ENCODE measurements at regions of chr10 and their contacts with region 1.

Region 1: DNA sequence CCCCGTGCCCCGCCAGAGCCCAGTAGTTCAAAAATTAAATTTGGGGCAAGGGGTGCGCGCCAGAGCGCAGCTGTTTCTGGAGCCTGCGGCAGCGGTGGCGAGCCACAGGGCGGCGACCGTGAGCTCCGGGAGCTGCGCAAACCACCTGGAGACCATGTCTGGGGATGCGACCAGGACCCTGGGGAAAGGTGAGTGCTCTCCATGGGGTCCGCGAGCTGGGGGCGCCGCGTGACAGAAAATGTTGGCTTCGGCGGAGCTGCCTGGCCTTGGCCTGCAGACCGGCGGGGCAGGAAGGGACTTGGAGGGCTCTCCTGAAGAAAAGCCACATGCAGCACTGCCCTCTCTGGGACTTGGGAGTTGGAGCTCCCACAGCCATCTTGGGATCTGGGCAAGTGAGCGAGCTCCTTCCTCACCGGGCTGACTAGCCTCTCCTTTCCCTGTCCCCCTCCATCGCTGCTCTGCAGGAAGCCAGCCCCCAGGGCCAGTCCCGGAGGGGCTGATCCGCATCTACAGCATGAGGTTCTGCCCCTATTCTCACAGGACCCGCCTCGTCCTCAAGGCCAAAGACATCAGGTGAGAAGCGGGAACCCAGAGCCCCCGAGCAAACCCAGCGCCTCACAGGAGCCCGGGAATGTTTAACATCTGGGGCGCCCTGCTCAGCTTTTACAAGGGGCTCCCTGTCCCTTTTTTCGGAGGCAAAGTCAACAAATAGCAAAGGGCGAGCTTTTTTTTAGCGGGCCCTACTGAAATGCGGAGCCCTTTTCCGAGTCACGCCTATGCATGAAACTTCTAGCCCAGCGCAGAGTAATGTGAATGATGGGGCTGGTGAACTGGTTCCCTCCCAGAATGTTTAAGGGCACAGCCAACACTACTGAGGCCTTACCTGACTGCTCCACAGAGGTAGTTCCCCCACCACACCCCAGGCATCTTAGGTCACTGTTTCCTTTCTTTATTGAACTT is 6.1 kb downstream of the GSTO2 start:
- DNase-seq: peak; percentile 79
- H3K4me3 ChIP-seq: peak overlapping the region in 1 of 2 experiments; percentile 41; a peak in 1 of 4 replicates
- H3K27ac ChIP-seq: peak overlapping the region in 1 of 2 experiments; percentile 76; a peak in 1 of 4 replicates
- H3K4me1 ChIP-seq: peaks cover 2 to 11% of the 10 kb centered on the region in 2 experiments; a peak in 2 of 4 replicates
- H3K27me3 ChIP-seq: no peaks in the 10 kb centered on the region
- CTCF ChIP-seq: peak; percentile 53
- EP300 ChIP-seq: no peak
- RAD21 ChIP-seq: peak; percentile 39

Region 2: GRCh38 chr10:104254493-104255310 is 20.3 kb before region 1 on chr10 and contains the start of gene GSTO1:
- CTCF ChIA-PET with region 1: interaction called, 28 read pairs
- POLR2A ChIA-PET with region 1: interaction called, 10 read pairs
- DNase-seq: peak; percentile 86
- H3K4me3 ChIP-seq: peak within 1 kb of the TSS; percentile 87 to 90
- H3K27ac ChIP-seq: peak within 1 kb of the TSS; percentile 89 to 93
- H3K4me1 ChIP-seq: peaks cover 8 to 21% of the 10 kb centered on the region in 2 experiments
- H3K27me3 ChIP-seq: no peaks in the 10 kb centered on the region
- CTCF ChIP-seq: no peak
- EP300 ChIP-seq: no peak
- RAD21 ChIP-seq: no peak
- polyA plus RNA-seq, gene GSTO1: 114 and 126 TPM in 2 replicates

Region 3: DNA sequence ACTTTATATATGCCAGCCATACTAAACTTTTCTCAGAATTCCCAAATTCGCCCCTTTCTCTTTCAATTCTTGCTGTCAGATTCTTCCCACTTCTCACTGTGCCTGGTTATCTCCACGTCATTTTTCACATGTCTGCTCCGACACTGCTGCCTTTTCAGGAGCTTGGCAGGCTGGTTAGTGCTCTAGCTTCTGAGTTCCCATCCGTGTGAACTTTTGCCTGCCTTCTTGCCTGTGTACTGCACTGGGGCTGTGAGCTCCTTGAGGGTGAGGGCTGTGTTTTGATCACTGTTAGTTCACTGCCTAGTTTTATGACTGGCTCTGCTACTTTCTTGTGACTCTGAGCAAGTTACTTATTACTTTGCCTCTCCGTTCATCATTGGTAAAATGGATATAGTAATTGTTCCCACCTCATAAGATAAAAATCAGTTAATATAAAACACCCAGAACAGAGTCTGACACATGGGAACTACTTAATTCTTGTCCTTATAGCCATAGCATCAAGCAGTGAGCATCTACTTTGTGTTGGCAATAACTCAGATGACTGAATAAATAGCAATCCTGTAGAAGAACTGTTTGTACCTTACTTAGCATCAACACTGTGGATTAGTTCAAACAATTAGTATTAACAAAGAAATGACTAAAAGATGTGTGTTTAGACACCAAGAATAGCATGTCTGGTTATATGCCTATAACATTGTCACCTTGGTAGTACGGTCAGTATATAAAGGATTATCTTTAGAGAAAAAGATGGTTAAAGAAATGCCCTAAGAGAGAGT is 14.9 kb before region 1 on chr10:
- CTCF ChIA-PET with region 1: interaction called, 28 read pairs
- POLR2A ChIA-PET with region 1: interaction called, 10 read pairs
- DNase-seq: no peak
- H3K4me3 ChIP-seq: peak overlapping the region in 1 of 2 experiments; percentile 19; a peak in 1 of 4 replicates
- H3K27ac ChIP-seq: peak overlapping the region; percentile 73 to 93
- H3K4me1 ChIP-seq: peaks cover 11 to 35% of the 10 kb centered on the region in 2 experiments
- H3K27me3 ChIP-seq: no peaks in the 10 kb centered on the region
- CTCF ChIP-seq: no peak
- EP300 ChIP-seq: no peak
- RAD21 ChIP-seq: no peak

Region 4: DNA sequence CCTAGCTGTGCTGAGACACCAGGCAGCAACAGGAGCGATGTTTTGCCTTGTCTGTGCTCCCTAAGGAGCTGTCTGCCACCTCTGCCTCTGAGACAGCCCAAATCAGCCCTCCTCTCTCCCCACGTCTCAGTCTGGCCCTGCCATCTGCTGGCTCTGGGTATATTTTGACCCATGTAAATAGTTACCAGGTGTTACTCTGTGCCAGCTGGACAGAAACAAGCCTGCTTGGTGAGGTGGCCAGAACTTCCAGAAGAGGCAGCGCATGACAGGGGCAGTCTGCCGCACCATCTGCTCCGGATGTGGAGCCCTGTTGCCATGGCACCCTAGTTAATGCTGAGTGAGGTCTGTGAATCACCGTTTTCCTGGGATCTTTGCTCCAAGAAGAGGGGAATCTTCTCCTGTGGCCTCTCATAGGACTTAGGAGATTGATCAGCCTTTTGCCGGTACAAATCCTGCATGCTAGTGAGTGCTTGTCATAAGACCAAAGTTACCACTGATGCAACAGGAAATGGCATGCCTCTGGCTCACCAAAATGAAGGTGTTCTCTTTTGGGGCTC is 25.8 kb after region 1 on chr10:
- CTCF ChIA-PET with region 1: interaction called, 21 read pairs
- POLR2A ChIA-PET with region 1: no interaction called
- DNase-seq: peak; percentile 83
- H3K4me3 ChIP-seq: peak overlapping the region; percentile 9 to 15; a peak in 3 of 4 replicates
- H3K27ac ChIP-seq: peak overlapping the region; percentile 96 to 98
- H3K4me1 ChIP-seq: peaks cover 22 to 35% of the 10 kb centered on the region in 2 experiments
- H3K27me3 ChIP-seq: no peaks in the 10 kb centered on the region
- CTCF ChIP-seq: peak; percentile 39; the same call in 1 of the 2 replicates
- EP300 ChIP-seq: peak in 1 of 2 experiments; percentile 38; a peak in 1 of 4 replicates
- RAD21 ChIP-seq: peak; percentile 65

Measured in SK-N-SH (cell line).